ENCODE measurements at regions of chr10 and their contacts with region 1.

Region 1: GRCh38 chr10:11165591-11166543 is 148.2 kb downstream of the CELF2 start:
- DNase-seq: no peak
- H3K4me3 ChIP-seq: peak overlapping the region; percentile 71 to 89 (median 82)
- H3K27ac ChIP-seq: peak overlapping the region; percentile 85 to 93 (median 88)
- H3K4me1 ChIP-seq: peaks cover 50 to 88% (median 87%) of the 10 kb centered on the region in 4 donors
- H3K27me3 ChIP-seq: no peaks in the 10 kb centered on the region
- CTCF ChIP-seq: peak; percentile 22 to 58 (median 36)
- EP300 ChIP-seq: no peak
- POLR2A ChIP-seq: no peak

Region 2: GRCh38 chr10:10804998-10805740 is 360.7 kb before region 1 on chr10:
- intact Hi-C with region 1: loop called (anchors 5 kb)
- DNase-seq: no peak
- H3K4me3 ChIP-seq: no peak overlapping the region
- H3K27ac ChIP-seq: peak overlapping the region; percentile 55 to 89 (median 70)
- H3K4me1 ChIP-seq: peaks cover 11 to 74% (median 62%) of the 10 kb centered on the region in 4 donors
- H3K27me3 ChIP-seq: no peaks in the 10 kb centered on the region
- CTCF ChIP-seq: no peak
- EP300 ChIP-seq: no peak
- POLR2A ChIP-seq: no peak

Region 3: GRCh38 chr10:10919976-10920375 is 245.9 kb before region 1 on chr10:
- intact Hi-C with region 1: loop called (anchors 10 kb)
- DNase-seq: no peak
- H3K4me3 ChIP-seq: no peak overlapping the region
- H3K27ac ChIP-seq: no peak overlapping the region
- H3K4me1 ChIP-seq: peaks cover 0 to 25% (median 17%) of the 10 kb centered on the region in 4 donors
- H3K27me3 ChIP-seq: no peaks in the 10 kb centered on the region
- CTCF ChIP-seq: no peak
- EP300 ChIP-seq: no peak
- POLR2A ChIP-seq: no peak

Region 4: DNA sequence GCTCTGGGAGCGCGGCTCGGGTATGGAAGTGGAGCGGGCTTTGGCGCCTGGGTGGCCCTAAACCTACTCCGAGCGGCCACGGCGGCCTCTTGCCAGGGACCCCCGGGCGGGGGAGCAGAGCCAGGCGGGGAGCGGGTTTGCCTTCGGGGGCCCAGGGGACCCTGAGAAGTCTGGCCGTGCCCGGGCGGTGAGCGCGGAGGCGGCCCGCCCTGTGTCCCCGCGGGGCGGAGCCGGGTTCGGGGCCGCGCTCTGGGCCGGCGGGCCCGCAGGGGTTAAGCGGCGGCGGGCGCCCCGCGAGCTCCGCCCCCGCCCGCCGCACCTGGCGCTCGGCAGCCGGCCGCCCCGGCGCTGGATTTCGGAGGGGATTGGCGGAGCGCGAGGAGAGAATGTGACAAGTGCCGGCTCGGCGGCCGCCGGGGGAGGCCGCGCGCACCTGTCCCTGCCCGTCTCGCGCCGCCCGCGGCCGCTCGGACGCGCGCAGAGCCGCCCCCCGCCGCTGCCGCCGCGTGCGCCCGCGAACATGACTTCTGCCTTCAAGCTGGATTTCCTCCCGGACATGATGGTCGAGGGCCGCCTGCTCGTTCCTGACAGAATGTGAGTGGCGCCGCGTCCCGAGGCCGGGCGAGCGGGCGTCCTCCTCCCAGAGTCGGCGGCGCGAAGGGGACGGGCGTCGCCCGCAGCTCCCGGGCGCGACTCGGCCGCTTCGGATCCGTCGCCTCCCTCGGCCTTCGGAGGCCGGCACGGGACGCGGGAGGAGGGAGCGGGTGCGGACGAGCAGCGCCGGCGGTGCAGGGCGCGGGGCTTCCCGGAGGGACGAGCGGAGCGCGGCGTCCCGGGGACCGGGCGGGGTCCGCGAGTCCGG is 148.1 kb before region 1 on chr10 and contains the start of gene CELF2:
- intact Hi-C with region 1: loop called (anchors 5 kb)
- DNase-seq: no peak
- H3K4me3 ChIP-seq: peak within 1 kb of the TSS; percentile 84 to 95 (median 92)
- H3K27ac ChIP-seq: peak within 1 kb of the TSS; percentile 86 to 93 (median 90)
- H3K4me1 ChIP-seq: peaks cover 24 to 58% (median 47%) of the 10 kb centered on the region in 4 donors
- H3K27me3 ChIP-seq: no peaks in the 10 kb centered on the region
- CTCF ChIP-seq: no peak
- EP300 ChIP-seq: no peak
- POLR2A ChIP-seq: peak; percentile 19
- total RNA-seq, gene CELF2: 81.8 to 128 (median 104) TPM

Region 5: GRCh38 chr10:11045995-11046775 is 119.7 kb before region 1 on chr10:
- intact Hi-C with region 1: loop called (anchors 10 kb)
- DNase-seq: no peak
- H3K4me3 ChIP-seq: peak overlapping the region in 3 of 4 donors; percentile 2 to 13 (median 7)
- H3K27ac ChIP-seq: peak overlapping the region; percentile 46 to 76 (median 59)
- H3K4me1 ChIP-seq: peaks cover 58 to 82% (median 63%) of the 10 kb centered on the region in 4 donors
- H3K27me3 ChIP-seq: no peaks in the 10 kb centered on the region
- CTCF ChIP-seq: no peak
- EP300 ChIP-seq: no peak
- POLR2A ChIP-seq: no peak

Measured in esophagus muscularis mucosa (tissue), 4 donors.